HEK293T (cell line): ENCODE measurements at regions of chr14 and their contacts with region 1.

Region 1: DNA sequence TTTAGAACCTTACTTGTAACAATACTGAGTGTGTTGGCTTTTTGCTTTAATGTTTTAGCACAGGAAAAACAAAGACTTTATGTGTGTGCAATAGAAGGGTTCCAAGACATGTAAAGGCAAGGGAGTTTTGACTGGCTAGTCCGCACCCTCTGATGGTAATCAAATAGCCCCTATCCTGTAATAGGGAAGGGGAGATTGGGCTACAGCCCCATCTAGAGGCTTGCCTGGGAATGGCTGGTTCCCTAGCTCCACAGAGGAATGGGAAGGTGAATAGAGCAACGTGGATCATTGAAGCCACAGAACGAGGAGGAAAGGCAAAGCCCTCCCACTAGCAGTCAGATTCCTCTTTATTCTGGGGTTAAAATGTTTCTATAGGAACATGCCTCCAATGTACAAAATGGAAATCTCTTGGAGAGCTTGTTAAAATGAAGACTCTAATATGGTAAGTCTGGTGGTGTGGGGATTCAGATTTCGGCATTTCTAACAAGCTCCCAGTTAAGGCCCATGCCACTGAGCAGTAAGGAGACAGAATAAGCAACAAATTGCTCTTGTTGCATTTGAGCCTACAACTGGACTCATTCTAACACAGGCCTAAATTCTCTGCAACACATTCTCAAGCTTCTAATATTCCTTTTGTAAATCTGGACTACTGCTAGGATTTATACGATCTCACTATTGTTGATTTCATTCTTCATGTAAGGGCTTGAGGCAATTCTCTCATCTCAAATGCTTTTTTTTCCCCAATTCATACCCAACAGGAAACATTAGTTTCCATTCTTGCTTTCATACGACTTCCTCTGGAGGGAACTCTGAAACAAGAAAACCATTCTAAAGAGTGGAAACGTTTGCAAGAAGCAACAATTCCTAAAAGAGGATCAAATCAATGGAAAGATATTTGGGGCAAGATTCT is 57.1 kb downstream of the NIN start:
- DNase-seq: peak; percentile 71

Region 2: DNA sequence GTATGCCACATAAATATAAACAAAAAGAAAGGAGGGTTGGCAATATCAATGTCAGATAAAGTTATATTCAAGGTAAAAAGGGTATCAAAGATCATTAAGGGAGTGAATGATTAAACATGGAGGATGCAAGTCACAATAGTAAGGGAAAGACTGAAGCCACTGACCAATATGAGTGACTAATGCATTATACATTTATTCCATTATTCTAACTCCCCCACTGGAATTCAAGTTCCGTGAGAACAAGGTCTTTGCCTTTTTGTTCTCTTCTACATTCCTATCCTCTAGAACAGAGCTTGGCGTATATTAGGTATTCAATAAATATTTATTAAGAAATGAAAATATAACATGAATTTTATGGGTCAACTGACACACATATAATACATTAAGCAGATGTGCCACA is 272.2 kb before region 1 on chr14:
- CTCF ChIA-PET with region 1: no interaction called
- POLR2A ChIA-PET with region 1: no interaction called
- DNase-seq: no peak

Region 3: GRCh38 chr14:50762001-50762930 is 11.6 kb before region 1 on chr14:
- CTCF ChIA-PET with region 1: interaction called, 10 read pairs
- POLR2A ChIA-PET with region 1: no interaction called
- DNase-seq: no peak

Region 4: DNA sequence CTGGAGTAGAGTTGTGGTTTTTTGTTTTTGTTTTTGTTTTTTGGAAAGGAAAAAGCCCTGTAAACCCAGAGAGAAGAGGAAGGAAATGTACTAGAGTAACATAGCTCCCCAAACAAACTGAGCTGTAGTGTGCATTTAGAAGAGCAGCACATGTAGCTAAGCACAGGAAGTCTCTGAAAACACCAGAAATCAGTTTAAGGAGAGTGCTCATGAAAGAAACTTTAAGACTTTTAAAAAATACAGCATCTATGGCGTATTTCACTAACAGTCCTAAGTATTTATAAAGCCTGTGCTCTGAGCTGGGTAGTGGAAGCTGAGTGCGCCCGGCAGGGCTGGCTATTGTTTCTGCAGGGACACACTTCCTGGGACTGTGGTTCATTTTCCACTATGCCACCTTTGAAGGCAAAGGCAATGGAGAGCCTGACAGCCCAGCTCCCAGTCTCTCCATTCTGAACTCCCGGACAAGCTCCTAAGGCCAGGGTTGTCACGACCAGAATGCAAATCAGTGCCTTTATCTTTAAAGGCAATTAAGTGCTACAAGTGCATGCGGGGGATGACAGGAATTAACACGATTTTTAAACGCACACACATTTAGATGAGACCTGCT is 11.7 kb after region 1 on chr14:
- CTCF ChIA-PET with region 1: interaction called, 19 read pairs
- POLR2A ChIA-PET with region 1: no interaction called
- DNase-seq: no peak

Region 5: DNA sequence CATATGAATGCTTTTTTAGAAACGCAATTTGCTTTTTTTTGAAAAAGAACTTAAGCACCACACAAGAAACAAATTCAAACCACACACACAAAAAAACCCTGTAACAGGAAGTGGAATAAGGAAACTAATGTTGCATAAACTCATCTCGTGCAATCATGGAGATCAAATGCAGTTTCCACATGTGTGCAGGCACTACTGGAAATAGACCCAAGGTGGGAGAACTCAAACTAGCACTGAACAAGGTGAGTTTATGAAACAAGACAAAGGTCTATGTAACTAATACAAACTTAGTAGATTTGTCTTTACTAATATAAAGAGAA is 39.6 kb after region 1 on chr14:
- CTCF ChIA-PET with region 1: no interaction called
- POLR2A ChIA-PET with region 1: no interaction called
- DNase-seq: no peak

Region 6: DNA sequence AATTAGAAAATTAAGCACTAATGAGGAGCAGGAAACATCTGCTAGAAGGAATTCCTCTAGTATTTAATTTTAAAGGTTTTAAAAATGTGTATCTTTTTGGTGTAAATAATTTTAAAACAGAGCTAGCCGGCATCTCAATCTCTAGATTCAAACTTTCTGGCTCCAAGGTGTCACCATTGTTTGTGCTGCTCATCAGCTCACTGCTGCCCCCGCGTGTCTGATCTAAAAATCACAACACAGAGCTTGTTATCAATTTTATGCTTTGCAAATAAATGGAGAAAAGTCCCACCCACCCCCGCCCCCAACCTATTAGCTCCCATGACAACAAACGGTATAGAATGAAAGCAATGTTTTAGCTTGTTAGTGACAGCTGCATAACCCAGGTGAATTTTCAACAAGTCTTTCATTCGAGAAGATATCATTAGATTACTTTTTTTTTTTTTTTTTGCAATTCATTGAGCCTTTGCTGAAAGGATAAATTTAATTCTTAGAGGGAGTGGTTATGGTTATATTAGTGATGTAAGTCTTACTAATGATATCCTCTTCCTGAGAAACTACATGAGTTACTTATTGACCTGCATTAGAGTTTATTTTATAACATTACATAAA is 86.7 kb after region 1 on chr14:
- CTCF ChIA-PET with region 1: interaction called, 32 read pairs
- POLR2A ChIA-PET with region 1: interaction called, 5 read pairs
- DNase-seq: peak; percentile 80